Aorta (tissue), 5 donors: ENCODE measurements at regions of chr9 and their contacts with region 1.

Region 1: DNA sequence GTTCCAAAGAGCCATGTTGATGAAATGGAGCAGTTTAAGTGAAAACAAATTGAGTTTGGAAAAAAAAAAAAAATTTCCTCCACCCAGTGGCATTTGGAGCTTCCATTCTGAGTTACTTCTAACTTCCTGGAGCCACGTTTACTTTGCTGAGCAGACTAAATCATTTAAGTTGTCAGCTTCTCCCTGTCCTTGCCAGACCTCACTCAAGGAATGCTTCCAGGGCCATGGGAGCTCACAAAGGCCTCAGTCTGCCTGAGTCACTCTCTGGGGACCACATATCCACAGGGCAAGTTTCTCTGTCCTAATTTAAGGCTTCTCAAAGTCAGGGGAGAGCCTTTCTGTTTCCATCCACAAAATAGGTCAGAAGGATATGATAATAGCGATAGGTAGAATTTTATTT is 210.3 kb upstream of the TNC start:
- DNase-seq: peak; percentile 77 to 82
- ATAC-seq: peak; percentile 79
- H3K4me3 ChIP-seq: no peak overlapping the region
- H3K27ac ChIP-seq: no peak overlapping the region
- H3K4me1 ChIP-seq: peaks cover 0 to 3% of the 10 kb centered on the region in 2 donors
- H3K27me3 ChIP-seq: no peaks in the 10 kb centered on the region

Region 2: GRCh38 chr9:115085773-115086377 is 242.4 kb before region 1 on chr9:
- intact Hi-C with region 1: no loop called
- DNase-seq: no peak
- ATAC-seq: no peak
- H3K4me3 ChIP-seq: no peak overlapping the region
- H3K27ac ChIP-seq: no peak overlapping the region
- H3K4me1 ChIP-seq: no peaks in the 10 kb centered on the region
- H3K27me3 ChIP-seq: no peaks in the 10 kb centered on the region

Region 3: GRCh38 chr9:115146581-115147021 is 181.6 kb before region 1 on chr9:
- intact Hi-C with region 1: loop called in 1 of 2 experiments (anchors 10 kb)
- DNase-seq: peak in 1 of 2 donors; percentile 45
- ATAC-seq: peak; percentile 85
- H3K4me3 ChIP-seq: no peak overlapping the region
- H3K27ac ChIP-seq: peak overlapping the region; percentile 90 to 94
- H3K4me1 ChIP-seq: peaks cover 0 to 10% of the 10 kb centered on the region in 2 donors
- H3K27me3 ChIP-seq: no peaks in the 10 kb centered on the region

Region 4: GRCh38 chr9:115234094-115234493 is 94.1 kb before region 1 on chr9:
- intact Hi-C with region 1: no loop called
- DNase-seq: no peak
- ATAC-seq: no peak
- H3K4me3 ChIP-seq: no peak overlapping the region
- H3K27ac ChIP-seq: no peak overlapping the region
- H3K4me1 ChIP-seq: no peaks in the 10 kb centered on the region
- H3K27me3 ChIP-seq: no peaks in the 10 kb centered on the region

Region 5: GRCh38 chr9:115524453-115525059 is 196.3 kb after region 1 on chr9:
- intact Hi-C with region 1: loop called in 1 of 2 experiments (anchors 10 kb)
- DNase-seq: no peak
- ATAC-seq: peak; percentile 85
- H3K4me3 ChIP-seq: no peak overlapping the region
- H3K27ac ChIP-seq: no peak overlapping the region
- H3K4me1 ChIP-seq: peaks cover 0 to 2% of the 10 kb centered on the region in 2 donors
- H3K27me3 ChIP-seq: no peaks in the 10 kb centered on the region